ENCODE measurements at regions of chr6 and their contacts with region 1.

Region 1: GRCh38 chr6:137927777-137928218 is 60.7 kb downstream of the TNFAIP3 start:
- DNase-seq: peak; percentile 80
- H3K4me3 Mint-ChIP-seq: peak overlapping the region; percentile 52
- H3K27ac Mint-ChIP-seq: peak overlapping the region; percentile 93
- H3K4me1 Mint-ChIP-seq: peaks cover 82% of the 10 kb centered on the region
- H3K27me3 Mint-ChIP-seq: no peaks in the 10 kb centered on the region

Region 2: DNA sequence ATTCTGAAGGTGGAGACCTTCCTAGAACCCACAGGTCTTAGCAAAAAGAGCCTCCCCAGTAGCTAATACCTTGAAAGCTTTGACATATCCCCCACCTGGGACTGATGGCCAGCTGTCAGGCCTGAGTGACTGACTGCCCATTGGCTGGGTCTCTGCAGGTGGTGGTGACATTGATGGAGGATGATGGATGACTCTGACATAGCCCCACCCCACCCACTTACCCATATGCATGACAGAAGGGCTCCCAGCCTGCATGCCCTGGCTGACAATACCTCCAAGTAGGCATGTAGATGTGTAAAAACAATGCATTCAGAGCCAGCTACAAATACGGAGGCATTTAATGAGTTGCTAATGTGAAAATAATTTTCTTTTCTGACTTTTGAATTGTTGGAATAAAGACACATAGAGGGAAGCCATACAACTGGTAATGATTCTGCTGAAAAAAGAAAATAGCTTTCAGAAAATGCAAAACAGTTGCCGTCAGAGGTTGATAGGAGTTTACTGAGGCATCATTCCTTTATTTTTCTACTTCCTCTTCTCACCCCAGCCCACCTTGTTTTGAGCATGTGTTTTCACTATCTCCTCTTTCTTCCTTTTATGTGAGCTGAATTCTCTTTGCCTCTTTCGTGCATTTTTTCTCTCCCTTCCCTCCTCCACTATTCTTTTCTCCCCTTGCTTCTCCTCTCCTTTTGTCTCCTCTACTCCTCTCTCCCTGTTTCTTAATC is 504.2 kb before region 1 on chr6:
- intact Hi-C with region 1: no loop called
- DNase-seq: no peak
- H3K4me3 Mint-ChIP-seq: no peak overlapping the region
- H3K27ac Mint-ChIP-seq: no peak overlapping the region
- H3K4me1 Mint-ChIP-seq: peaks cover 9% of the 10 kb centered on the region
- H3K27me3 Mint-ChIP-seq: peaks cover 3% of the 10 kb centered on the region

Region 3: DNA sequence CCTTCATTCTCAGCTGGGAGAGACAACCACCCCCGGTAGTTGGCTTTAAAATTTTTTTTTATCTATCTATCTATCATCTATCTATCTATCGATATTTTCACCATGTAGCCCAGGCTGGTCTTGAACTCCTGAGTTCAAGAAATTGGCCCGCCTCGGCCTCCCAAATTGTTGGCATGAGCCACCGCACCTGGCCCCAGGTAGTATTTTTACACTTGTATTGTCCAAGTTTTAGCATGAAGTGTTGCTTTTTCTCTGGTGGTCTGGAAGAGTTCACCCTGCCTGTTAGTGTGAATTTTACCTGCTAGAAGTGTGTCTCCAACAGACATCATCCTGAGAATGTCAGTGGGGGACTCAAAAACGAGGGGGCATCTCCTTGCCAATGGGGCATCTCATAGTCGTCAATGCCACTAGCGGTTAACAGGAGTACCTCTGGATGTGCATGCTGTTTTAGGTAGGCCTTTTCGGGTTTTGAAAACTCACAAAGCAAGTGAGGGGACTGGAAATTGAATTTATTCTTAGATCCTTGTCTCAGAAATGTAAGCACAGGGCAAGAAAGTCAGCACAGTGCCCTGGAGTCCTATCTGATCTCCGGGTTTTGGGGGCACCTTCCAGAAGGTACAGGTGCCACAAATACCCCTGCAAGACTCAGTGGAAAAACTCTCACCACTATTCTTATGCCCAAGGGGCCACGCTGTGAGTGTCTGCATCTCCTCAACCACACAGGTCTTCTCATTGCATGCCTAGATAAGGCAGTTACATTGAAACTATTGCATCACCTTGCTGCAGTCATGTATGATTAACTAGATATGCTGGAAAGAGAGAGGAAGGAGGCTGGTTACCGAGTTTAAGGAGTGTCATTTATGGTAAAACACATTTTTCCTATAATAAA is 23.6 kb before region 1 on chr6:
- intact Hi-C with region 1: loop called (anchors 1 kb)
- DNase-seq: no peak
- H3K4me3 Mint-ChIP-seq: peak overlapping the region; percentile 19
- H3K27ac Mint-ChIP-seq: peak overlapping the region; percentile 97
- H3K4me1 Mint-ChIP-seq: peaks cover 59% of the 10 kb centered on the region
- H3K27me3 Mint-ChIP-seq: no peaks in the 10 kb centered on the region

Region 4: DNA sequence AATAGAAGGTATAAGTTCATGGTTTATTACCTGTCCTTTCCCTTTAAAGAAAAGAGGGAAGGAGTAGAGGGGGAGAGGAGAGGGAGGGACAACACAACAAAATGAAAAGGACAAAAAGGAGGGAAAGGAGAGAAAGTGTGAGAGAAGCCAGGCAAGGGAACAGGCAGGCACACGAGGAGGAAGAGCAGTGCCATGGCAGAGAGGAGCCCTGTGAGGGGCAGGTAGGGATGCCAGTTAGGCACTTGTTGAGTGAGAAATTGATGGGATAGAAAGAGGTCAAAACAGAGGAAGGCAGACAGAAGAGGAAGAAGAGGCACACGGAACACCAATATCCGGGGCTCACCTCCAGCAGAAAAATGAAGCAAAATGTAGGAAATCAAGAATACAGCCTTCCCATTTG is 18.3 kb before region 1 on chr6:
- intact Hi-C with region 1: loop called (anchors 1 kb)
- DNase-seq: no peak
- H3K4me3 Mint-ChIP-seq: peak overlapping the region; percentile 46
- H3K27ac Mint-ChIP-seq: peak overlapping the region; percentile 84
- H3K4me1 Mint-ChIP-seq: peaks cover 70% of the 10 kb centered on the region
- H3K27me3 Mint-ChIP-seq: no peaks in the 10 kb centered on the region

Region 5: DNA sequence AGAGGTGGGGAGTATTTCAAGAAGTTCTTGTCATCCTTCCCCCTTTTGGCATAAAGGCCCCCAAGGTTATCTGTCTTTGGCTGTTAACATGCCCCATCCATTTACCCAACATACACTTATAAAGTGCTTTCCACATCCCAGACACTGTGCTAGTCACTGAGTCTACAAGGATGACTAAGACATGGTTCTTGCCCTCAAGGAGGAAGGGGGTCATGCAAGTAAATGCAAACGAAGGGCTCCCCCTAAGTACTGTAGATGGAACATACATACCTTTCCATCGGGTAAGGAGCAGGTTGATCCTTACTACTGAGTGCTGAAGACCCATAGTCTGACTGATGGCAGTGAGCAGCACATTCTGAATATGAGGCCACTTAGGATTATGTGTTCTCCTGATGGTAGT is 1245.4 kb after region 1 on chr6:
- intact Hi-C with region 1: no loop called
- DNase-seq: no peak
- H3K4me3 Mint-ChIP-seq: no peak overlapping the region
- H3K27ac Mint-ChIP-seq: peak overlapping the region; percentile 82
- H3K4me1 Mint-ChIP-seq: peaks cover 82% of the 10 kb centered on the region
- H3K27me3 Mint-ChIP-seq: no peaks in the 10 kb centered on the region

Measured in activated T-helper 1 cell treated with anti-CD3 and anti-CD28 coated beads, Interleukin-12 subunit alpha, Interleukin-12 subunit beta, Interleukin-2, Interleukin-4 antibody, amounts not matched to agents 30 ng/mL and 10 ng/mL and 1 ng/mL, durations not matched to agents 14 hours and 24 hours and 36 hours (primary cell).